ENCODE measurements at regions of chr6 and their contacts with region 1.

Region 1: GRCh38 chr6:110815217-110816109 is at the start of gene CDK19:
- DNase-seq: peak; percentile 96
- ATAC-seq: peak; percentile 79
- H3K4me3 Mint-ChIP-seq: peak within 1 kb of the TSS; percentile 96
- H3K27ac Mint-ChIP-seq: peak within 1 kb of the TSS; percentile 96
- H3K4me1 Mint-ChIP-seq: peaks cover 44% of the 10 kb centered on the region
- H3K27me3 Mint-ChIP-seq: no peaks in the 10 kb centered on the region
- CTCF ChIP-seq: no peak
- total RNA-seq, gene CDK19: 27.2 and 31.1 TPM in 2 replicates

Region 2: GRCh38 chr6:109455502-109456282 is 1359.8 kb before region 1 on chr6 and contains the start of gene MICAL1:
- CTCF ChIA-PET with region 1: no interaction called
- POLR2A ChIA-PET with region 1: no interaction called
- intact Hi-C with region 1: loop called (anchors 5 kb)
- DNase-seq: peak; percentile 82
- ATAC-seq: peak; percentile 58
- H3K4me3 Mint-ChIP-seq: peak within 1 kb of the TSS; percentile 97
- H3K27ac Mint-ChIP-seq: peak within 1 kb of the TSS; percentile 98
- H3K4me1 Mint-ChIP-seq: peaks cover 80% of the 10 kb centered on the region
- H3K27me3 Mint-ChIP-seq: no peaks in the 10 kb centered on the region
- CTCF ChIP-seq: no peak
- total RNA-seq, gene MICAL1: 104 and 120 TPM in 2 replicates

Region 3: GRCh38 chr6:110528101-110528929 is 287.1 kb before region 1 on chr6:
- CTCF ChIA-PET with region 1: no interaction called
- POLR2A ChIA-PET with region 1: no interaction called
- intact Hi-C with region 1: loop called (anchors 5 kb)
- DNase-seq: no peak
- ATAC-seq: peak; percentile 70
- H3K4me3 Mint-ChIP-seq: no peak overlapping the region
- H3K27ac Mint-ChIP-seq: no peak overlapping the region
- H3K4me1 Mint-ChIP-seq: no peaks in the 10 kb centered on the region
- H3K27me3 Mint-ChIP-seq: peaks cover 3% of the 10 kb centered on the region
- CTCF ChIP-seq: no peak

Region 4: GRCh38 chr6:110799189-110799588 is 16.3 kb before region 1 on chr6:
- CTCF ChIA-PET with region 1: interaction called, 3 read pairs
- POLR2A ChIA-PET with region 1: interaction called, 10 read pairs
- intact Hi-C with region 1: loop called (anchors 2 kb)
- DNase-seq: no peak
- ATAC-seq: peak; percentile 70
- H3K4me3 Mint-ChIP-seq: peak overlapping the region; percentile 53
- H3K27ac Mint-ChIP-seq: peak overlapping the region; percentile 30
- H3K4me1 Mint-ChIP-seq: peaks cover 45% of the 10 kb centered on the region
- H3K27me3 Mint-ChIP-seq: no peaks in the 10 kb centered on the region
- CTCF ChIP-seq: no peak

Region 5: GRCh38 chr6:110944681-110945151 is 129.3 kb after region 1 on chr6:
- CTCF ChIA-PET with region 1: interaction called, 4 read pairs
- POLR2A ChIA-PET with region 1: interaction called, 15 read pairs
- intact Hi-C with region 1: loop called (anchors 1 kb)
- DNase-seq: peak; percentile 21
- ATAC-seq: peak; percentile 94
- H3K4me3 Mint-ChIP-seq: no peak overlapping the region
- H3K27ac Mint-ChIP-seq: peak overlapping the region; percentile 82
- H3K4me1 Mint-ChIP-seq: peaks cover 6% of the 10 kb centered on the region
- H3K27me3 Mint-ChIP-seq: no peaks in the 10 kb centered on the region
- CTCF ChIP-seq: no peak

Region 6: DNA sequence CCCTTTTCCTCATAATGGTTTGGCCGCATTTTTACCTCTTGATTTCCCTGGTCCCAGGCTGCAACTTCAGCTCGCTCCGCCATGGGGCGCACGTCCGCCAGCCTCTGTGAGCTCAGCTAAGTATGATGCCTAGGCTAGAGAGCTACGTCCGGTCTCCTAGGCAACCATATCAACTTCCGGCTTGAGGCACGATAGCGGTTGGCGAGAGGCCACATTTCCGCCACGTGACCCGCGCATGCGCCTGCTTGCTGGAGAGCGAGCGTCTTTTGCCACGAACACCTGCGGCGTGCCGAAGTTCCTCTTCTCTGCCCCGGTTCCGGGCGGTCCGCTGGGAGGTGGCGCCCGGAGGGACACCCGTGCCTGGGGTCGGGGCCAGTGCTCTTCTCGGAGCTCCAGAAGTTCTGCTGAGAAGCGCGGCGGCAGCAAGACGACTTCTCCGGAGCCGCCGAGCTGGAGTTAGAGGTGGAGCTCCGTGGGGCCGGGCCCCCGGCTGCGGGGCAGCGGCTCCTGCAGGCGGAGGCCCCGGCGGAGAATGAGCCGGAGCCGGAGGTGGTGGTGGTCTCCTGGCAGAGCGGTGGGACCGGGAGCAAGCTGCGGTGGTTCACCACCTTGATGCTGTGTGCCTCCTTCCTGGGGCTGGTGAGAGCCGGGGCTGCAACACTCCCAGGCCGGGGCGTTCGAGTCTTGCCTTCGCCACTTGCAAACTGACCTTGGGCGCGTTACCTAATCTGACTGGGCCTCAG is 443.8 kb after region 1 on chr6:
- CTCF ChIA-PET with region 1: no interaction called
- POLR2A ChIA-PET with region 1: interaction called, 8 read pairs
- intact Hi-C with region 1: loop called (anchors 5 kb)
- DNase-seq: peak; percentile 97
- ATAC-seq: peak; percentile 93
- H3K4me3 Mint-ChIP-seq: peak overlapping the region; percentile 84
- H3K27ac Mint-ChIP-seq: peak overlapping the region; percentile 87
- H3K4me1 Mint-ChIP-seq: peaks cover 30% of the 10 kb centered on the region
- H3K27me3 Mint-ChIP-seq: no peaks in the 10 kb centered on the region
- CTCF ChIP-seq: peak; percentile 89

Region 7: DNA sequence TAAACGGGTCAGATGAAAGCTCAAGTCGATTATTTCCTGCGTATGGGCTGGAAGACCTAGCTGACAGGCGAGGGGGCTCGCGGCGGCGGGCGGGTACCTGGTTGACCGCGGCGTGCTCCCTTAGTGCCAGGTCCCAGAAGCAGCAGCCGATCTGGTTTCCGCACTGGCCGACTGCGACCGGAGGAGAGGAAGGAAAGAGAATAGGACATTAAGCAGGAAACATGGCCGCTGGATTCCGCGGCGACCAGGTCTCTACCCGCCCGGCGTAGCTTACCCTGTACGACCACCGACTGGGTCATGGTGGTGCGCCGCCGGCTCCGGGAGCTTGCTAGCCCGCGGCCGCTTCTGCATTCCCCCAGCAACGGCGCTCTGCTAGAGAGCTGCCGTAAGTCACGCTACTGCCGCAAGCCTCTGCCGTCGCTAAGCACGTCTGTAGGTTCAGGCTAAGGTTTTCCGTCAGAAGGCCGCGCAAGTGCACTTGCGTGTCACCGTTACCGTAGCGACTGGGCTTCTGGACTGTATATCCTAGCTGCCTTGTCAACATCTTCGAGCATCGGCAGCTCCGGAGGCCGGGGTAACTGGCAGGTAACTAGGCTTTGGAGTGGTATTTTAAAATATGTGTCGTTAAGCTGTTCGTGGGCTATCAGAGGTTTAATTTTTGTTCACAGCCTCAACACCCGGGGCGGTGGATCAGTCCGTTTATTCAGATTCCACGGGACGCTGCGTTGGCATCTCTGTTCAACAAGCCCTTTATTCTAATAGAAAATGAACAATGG is 1271.9 kb after region 1 on chr6 and contains the starts of genes FAM229B and TUBE1:
- CTCF ChIA-PET with region 1: no interaction called
- POLR2A ChIA-PET with region 1: no interaction called
- intact Hi-C with region 1: loop called (anchors 10 kb)
- DNase-seq: peak; percentile 74
- ATAC-seq: peak; percentile 96
- H3K4me3 Mint-ChIP-seq: no peak within 1 kb of the TSS
- H3K27ac Mint-ChIP-seq: no peak within 1 kb of the TSS
- H3K4me1 Mint-ChIP-seq: no peaks in the 10 kb centered on the region
- H3K27me3 Mint-ChIP-seq: peaks cover 14% of the 10 kb centered on the region
- CTCF ChIP-seq: no peak
- total RNA-seq, gene FAM229B: 2.0 and 2.6 TPM in 2 replicates
- total RNA-seq, gene TUBE1: 24.1 and 28.0 TPM in 2 replicates

Measured in activated B cell treated with CpG ODN at 0.5 μM for 24 hours (primary cell).